ENCODE measurements at regions of chr1 and their contacts with region 1.

Region 1: GRCh38 chr1:21232044-21232443 is 55.3 kb upstream of the EIF4G3 start:
- DNase-seq: peak; percentile 40
- H3K4me3 ChIP-seq: no peak overlapping the region
- H3K27ac ChIP-seq: no peak overlapping the region
- H3K4me1 ChIP-seq: no peaks in the 10 kb centered on the region
- H3K27me3 ChIP-seq: no peaks in the 10 kb centered on the region
- CTCF ChIP-seq: peak; percentile 79 to 87 (median 82)
- EP300 ChIP-seq: no peak
- POLR2A ChIP-seq: no peak

Region 2: GRCh38 chr1:20318971-20319370 is 913.1 kb before region 1 on chr1:
- in situ Hi-C with region 1: no loop called
- intact Hi-C with region 1: loop called (anchors 5 kb)
- DNase-seq: no peak
- H3K4me3 ChIP-seq: no peak overlapping the region
- H3K27ac ChIP-seq: no peak overlapping the region
- H3K4me1 ChIP-seq: peaks cover 0 to 4% (median 0%) of the 10 kb centered on the region in 4 donors
- H3K27me3 ChIP-seq: no peaks in the 10 kb centered on the region
- CTCF ChIP-seq: no peak
- EP300 ChIP-seq: no peak
- POLR2A ChIP-seq: no peak

Region 3: GRCh38 chr1:21355956-21356355 is 123.9 kb after region 1 on chr1:
- in situ Hi-C with region 1: loop called in 2 of 4 experiments (anchors 10 kb)
- intact Hi-C with region 1: no loop called
- DNase-seq: no peak
- H3K4me3 ChIP-seq: no peak overlapping the region
- H3K27ac ChIP-seq: no peak overlapping the region
- H3K4me1 ChIP-seq: no peaks in the 10 kb centered on the region
- H3K27me3 ChIP-seq: no peaks in the 10 kb centered on the region
- CTCF ChIP-seq: no peak
- EP300 ChIP-seq: no peak
- POLR2A ChIP-seq: no peak

Region 4: DNA sequence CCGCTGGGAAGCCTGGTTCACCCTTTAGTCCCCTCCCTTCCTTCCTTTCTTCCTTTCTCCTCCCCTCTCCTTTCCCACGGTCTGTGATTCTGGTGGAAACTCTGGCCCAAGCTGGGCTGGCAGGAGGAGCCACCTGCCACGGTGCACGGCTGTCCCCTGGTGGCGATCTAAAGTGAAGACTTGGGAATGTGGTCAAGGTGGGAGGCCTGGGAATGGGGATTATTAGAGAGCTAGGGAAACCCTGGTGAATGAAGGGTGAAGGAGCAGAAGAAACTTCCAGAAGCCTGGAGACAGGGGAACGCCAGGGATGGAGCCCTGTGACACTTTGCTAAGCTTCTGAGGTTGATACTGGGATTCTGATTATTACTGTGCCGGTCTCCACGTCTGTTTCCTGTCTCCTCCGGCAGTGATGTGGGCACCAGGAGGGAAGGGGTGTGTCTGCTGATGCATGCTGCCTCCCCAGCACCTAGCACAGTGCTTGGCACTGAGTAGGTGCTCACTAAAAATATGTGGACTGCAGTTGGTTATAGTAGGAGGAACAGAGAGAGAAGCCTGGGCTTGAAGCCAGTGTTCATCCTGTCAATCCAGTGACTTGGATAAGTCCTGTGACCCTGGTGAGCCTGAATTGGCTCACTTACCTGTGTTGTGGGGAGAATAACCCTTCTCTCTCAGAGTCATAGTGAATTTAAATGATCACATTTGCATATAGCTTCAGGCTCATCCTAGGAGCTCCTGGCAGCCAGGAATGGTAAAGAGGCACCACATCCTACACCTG is 136.7 kb after region 1 on chr1:
- in situ Hi-C with region 1: loop called in 1 of 4 experiments (anchors 10 kb)
- intact Hi-C with region 1: loop called (anchors 1 kb)
- DNase-seq: peak; percentile 84
- H3K4me3 ChIP-seq: peak overlapping the region in 1 of 4 donors; percentile 8
- H3K27ac ChIP-seq: peak overlapping the region in 2 of 4 donors; percentile 44 to 59
- H3K4me1 ChIP-seq: peaks cover 0 to 9% (median 4%) of the 10 kb centered on the region in 4 donors
- H3K27me3 ChIP-seq: no peaks in the 10 kb centered on the region
- CTCF ChIP-seq: peak; percentile 98 to 100 (median 100)
- EP300 ChIP-seq: no peak
- POLR2A ChIP-seq: no peak

Region 5: GRCh38 chr1:21659099-21659923 is 427.3 kb after region 1 on chr1:
- in situ Hi-C with region 1: loop called in 2 of 4 experiments (anchors 25 kb)
- intact Hi-C with region 1: no loop called
- DNase-seq: peak; percentile 74
- H3K4me3 ChIP-seq: peak overlapping the region in 1 of 4 donors; percentile 24
- H3K27ac ChIP-seq: no peak overlapping the region
- H3K4me1 ChIP-seq: peaks cover 0 to 4% (median 3%) of the 10 kb centered on the region in 4 donors
- H3K27me3 ChIP-seq: peaks cover 52% of the 10 kb centered on the region
- CTCF ChIP-seq: peak; percentile 92 to 97 (median 95)
- EP300 ChIP-seq: no peak
- POLR2A ChIP-seq: no peak

Measured in transverse colon (tissue), 4 donors.